ENCODE measurements at regions of chr16 and their contacts with region 1.

Region 1: DNA sequence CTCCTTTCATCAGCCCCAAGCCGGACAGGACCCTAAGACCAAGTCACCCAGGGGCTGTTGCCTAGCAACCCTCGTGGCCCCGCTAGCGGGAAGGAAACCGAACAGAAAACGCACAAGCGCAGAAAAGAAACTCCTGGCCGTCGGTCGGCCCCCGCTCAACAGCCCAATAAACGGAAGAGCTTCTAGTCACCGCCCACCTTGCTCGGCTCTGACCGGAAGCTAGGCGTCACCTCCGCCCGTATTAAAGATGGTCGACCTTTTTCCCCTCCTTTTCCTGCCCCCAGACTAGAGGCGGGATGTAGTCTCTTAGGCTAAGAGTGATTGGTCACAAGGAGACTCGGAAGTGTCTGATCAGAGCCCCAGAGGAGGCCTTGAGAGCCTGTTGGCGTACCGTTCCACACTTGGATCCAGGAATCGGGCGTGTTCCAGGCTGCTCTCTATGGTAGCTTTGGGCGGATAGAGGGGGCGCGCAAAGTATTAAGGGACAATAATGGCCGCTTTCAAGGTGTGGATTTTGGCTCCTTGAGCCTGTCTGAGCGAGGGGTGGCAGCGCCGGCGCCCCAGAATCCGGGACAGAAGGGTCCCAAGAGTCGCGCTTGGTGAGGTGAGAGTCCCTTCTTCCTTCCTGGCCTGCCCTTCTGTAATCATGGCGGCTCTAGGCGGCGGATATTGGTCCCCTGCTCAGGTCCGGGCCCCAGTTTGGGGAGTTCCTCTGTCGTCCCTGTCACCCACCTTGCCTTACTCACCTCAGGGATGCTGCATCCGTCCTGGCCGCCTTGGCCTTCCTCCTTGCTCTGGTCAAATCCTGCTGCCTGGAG is at the starts of genes DHX38 and TXNL4B:
- DNase-seq: peak; percentile 95 to 98 (median 98)
- ATAC-seq: peak; percentile 98
- H3K4me3 ChIP-seq: peak within 1 kb of the TSS; percentile 62
- H3K27ac ChIP-seq: peak within 1 kb of the TSS; percentile 81
- H3K4me1 ChIP-seq: peaks cover 4 to 8% of the 10 kb centered on the region in 2 experiments; a peak in 2 of 5 replicates
- H3K27me3 ChIP-seq: no peaks in the 10 kb centered on the region
- CTCF ChIP-seq: no peak
- EP300 ChIP-seq: 0 out of 2 replicates have a peak, but pooled peaks have one; percentile 32
- POLR2A ChIP-seq: peak; percentile 86
- RAD21 ChIP-seq: no peak
- polyA plus RNA-seq, gene DHX38: 2.8 to 4.6 TPM
- polyA plus RNA-seq, gene TXNL4B: 22.3 to 26.9 TPM

Region 2: GRCh38 chr16:72072514-72073342 is 20.9 kb before region 1 on chr16:
- CTCF ChIA-PET with region 1: interaction called, 22 read pairs
- POLR2A ChIA-PET with region 1: interaction called, 13 read pairs
- in situ Hi-C with region 1: no loop called
- intact Hi-C with region 1: no loop called
- DNase-seq: peak; percentile 42 to 80 (median 54)
- ATAC-seq: peak; percentile 82
- H3K4me3 ChIP-seq: no peak overlapping the region
- H3K27ac ChIP-seq: peak overlapping the region; percentile 74
- H3K4me1 ChIP-seq: peaks cover 0 to 11% of the 10 kb centered on the region in 2 experiments; a peak in 2 of 5 replicates
- H3K27me3 ChIP-seq: no peaks in the 10 kb centered on the region
- CTCF ChIP-seq: no peak
- EP300 ChIP-seq: peak; percentile 66
- POLR2A ChIP-seq: no peak
- RAD21 ChIP-seq: no peak

Region 3: GRCh38 chr16:72241930-72242329 is 148.3 kb after region 1 on chr16:
- CTCF ChIA-PET with region 1: no interaction called
- POLR2A ChIA-PET with region 1: no interaction called
- in situ Hi-C with region 1: no loop called
- intact Hi-C with region 1: no loop called
- DNase-seq: peak; percentile 16 to 40 (median 27)
- ATAC-seq: peak; percentile 84
- H3K4me3 ChIP-seq: no peak overlapping the region
- H3K27ac ChIP-seq: no peak overlapping the region
- H3K4me1 ChIP-seq: no peaks in the 10 kb centered on the region
- H3K27me3 ChIP-seq: 0 out of 5 replicates have a peak, but pooled peaks cover 0 to 1% of the 10 kb centered on the region in 2 experiments
- CTCF ChIP-seq: peak; percentile 58 to 74 (median 66)
- EP300 ChIP-seq: no peak
- POLR2A ChIP-seq: no peak
- RAD21 ChIP-seq: peak; percentile 68 to 70

Measured in K562 (cell line).